ENCODE measurements at regions of chrX and their contacts with region 1.

Region 1: DNA sequence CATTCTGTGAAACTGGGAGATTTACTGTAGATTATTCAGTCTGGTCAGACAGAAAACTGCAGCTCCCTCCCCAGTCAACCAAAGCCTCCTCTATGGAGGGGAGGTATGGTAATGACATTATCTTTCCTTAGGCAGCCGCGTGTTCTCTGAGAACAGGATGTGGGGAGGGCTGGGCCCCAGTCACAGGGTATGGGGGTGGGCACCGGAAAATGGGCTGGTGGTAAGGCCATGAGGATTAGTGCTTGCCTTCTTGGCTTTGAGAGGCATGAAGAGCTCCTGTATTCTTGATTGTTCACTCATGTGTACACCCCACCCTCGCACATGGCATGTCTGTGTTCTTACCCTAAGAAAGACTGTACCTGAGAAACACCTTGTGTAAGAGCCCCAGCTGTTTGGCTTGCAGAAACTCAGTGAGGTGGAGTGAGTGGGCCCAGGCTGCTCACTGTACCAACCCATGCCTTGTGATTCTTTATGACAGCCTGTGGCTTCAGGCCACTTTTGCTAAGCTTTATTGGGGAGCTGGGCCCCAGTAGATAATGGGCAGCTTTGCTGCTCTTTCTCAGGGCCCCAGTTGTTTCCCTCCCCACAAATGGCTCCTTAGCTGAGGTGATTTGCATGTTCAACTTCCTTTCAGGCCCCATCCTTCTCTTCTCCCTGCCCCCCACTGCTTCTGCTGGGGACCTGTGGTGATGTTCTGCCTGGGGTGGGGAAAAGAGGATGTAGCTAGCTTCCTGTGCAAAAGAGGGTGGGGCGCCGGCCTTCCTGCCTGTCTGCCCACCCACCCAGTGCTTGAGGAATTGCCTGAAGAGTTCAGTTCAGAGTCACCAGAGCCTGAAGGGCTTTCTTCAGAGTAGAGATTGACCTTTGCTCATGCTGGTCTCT is 30.7 kb downstream of the MSN start:
- DNase-seq: peak; percentile 26 to 85 (median 71)
- ATAC-seq: peak; percentile 77
- H3K4me3 ChIP-seq: peak overlapping the region; percentile 5 to 23
- H3K4me3 Mint-ChIP-seq: peak overlapping the region; percentile 81
- H3K27ac ChIP-seq: peak overlapping the region; percentile 38 to 90
- H3K27ac Mint-ChIP-seq: peak overlapping the region; percentile 97
- H3K4me1 ChIP-seq: peaks cover 92% of the 10 kb centered on the region
- H3K4me1 Mint-ChIP-seq: peaks cover 87% of the 10 kb centered on the region
- H3K27me3 ChIP-seq: no peaks in the 10 kb centered on the region
- H3K27me3 Mint-ChIP-seq: no peaks in the 10 kb centered on the region
- CTCF ChIP-seq: no peak

Region 2: GRCh38 chrX:65630771-65631170 is 67.4 kb before region 1 on chrX:
- CTCF ChIA-PET with region 1: no interaction called
- POLR2A ChIA-PET with region 1: no interaction called
- intact Hi-C with region 1: no loop called
- DNase-seq: no peak
- ATAC-seq: no peak
- H3K4me3 ChIP-seq: no peak overlapping the region
- H3K4me3 Mint-ChIP-seq: no peak overlapping the region
- H3K27ac ChIP-seq: no peak overlapping the region
- H3K27ac Mint-ChIP-seq: no peak overlapping the region
- H3K4me1 ChIP-seq: no peaks in the 10 kb centered on the region
- H3K4me1 Mint-ChIP-seq: peaks cover 2% of the 10 kb centered on the region
- H3K27me3 ChIP-seq: no peaks in the 10 kb centered on the region
- H3K27me3 Mint-ChIP-seq: no peaks in the 10 kb centered on the region
- CTCF ChIP-seq: no peak

Region 3: DNA sequence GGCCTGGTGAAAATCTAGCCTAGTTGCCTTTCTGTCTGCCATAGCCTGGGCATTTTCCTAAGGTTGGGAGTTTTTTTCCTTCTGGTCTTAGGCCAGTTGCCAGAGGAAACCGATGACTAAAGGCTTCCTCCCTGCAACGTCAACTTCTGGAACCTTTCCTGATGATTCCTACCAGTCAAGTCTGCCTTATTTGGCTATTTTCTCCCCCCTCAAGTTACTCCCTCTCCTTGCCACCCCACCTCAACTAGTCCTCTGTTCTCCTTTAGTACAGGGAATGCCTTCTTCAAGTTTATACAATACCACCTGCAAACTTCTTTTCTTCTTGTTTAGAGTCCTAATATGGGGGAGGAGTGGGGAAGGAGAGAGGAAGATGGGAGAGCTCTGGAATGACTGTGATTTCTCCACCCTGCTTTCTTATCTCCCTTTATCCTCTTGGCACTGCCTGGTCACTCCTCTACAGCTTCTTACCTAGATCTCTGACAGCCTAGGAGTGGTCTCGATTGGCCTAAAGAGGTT is 20.1 kb before region 1 on chrX:
- CTCF ChIA-PET with region 1: interaction called, 6 read pairs
- POLR2A ChIA-PET with region 1: interaction called, 17 read pairs
- intact Hi-C with region 1: no loop called
- DNase-seq: no peak
- ATAC-seq: no peak
- H3K4me3 ChIP-seq: no peak overlapping the region
- H3K4me3 Mint-ChIP-seq: peak overlapping the region; percentile 58
- H3K27ac ChIP-seq: peak overlapping the region in 1 of 2 experiments; percentile 54
- H3K27ac Mint-ChIP-seq: peak overlapping the region; percentile 77
- H3K4me1 ChIP-seq: peaks cover 85% of the 10 kb centered on the region
- H3K4me1 Mint-ChIP-seq: peaks cover 83% of the 10 kb centered on the region
- H3K27me3 ChIP-seq: no peaks in the 10 kb centered on the region
- H3K27me3 Mint-ChIP-seq: no peaks in the 10 kb centered on the region
- CTCF ChIP-seq: no peak

Region 4: GRCh38 chrX:65723706-65724105 is 25.6 kb after region 1 on chrX:
- CTCF ChIA-PET with region 1: no interaction called
- POLR2A ChIA-PET with region 1: interaction called, 3 read pairs
- intact Hi-C with region 1: loop called in 1 of 2 experiments (anchors 1 kb)
- DNase-seq: peak in 5 of 9 experiments; percentile 13 to 81 (median 53)
- ATAC-seq: peak; percentile 68
- H3K4me3 ChIP-seq: no peak overlapping the region
- H3K4me3 Mint-ChIP-seq: peak overlapping the region; percentile 45
- H3K27ac ChIP-seq: peak overlapping the region; percentile 58 to 83
- H3K27ac Mint-ChIP-seq: peak overlapping the region; percentile 91
- H3K4me1 ChIP-seq: peaks cover 86% of the 10 kb centered on the region
- H3K4me1 Mint-ChIP-seq: peaks cover 84% of the 10 kb centered on the region
- H3K27me3 ChIP-seq: no peaks in the 10 kb centered on the region
- H3K27me3 Mint-ChIP-seq: no peaks in the 10 kb centered on the region
- CTCF ChIP-seq: no peak